ENCODE measurements at regions of chr15 and their contacts with region 1.

Region 1: DNA sequence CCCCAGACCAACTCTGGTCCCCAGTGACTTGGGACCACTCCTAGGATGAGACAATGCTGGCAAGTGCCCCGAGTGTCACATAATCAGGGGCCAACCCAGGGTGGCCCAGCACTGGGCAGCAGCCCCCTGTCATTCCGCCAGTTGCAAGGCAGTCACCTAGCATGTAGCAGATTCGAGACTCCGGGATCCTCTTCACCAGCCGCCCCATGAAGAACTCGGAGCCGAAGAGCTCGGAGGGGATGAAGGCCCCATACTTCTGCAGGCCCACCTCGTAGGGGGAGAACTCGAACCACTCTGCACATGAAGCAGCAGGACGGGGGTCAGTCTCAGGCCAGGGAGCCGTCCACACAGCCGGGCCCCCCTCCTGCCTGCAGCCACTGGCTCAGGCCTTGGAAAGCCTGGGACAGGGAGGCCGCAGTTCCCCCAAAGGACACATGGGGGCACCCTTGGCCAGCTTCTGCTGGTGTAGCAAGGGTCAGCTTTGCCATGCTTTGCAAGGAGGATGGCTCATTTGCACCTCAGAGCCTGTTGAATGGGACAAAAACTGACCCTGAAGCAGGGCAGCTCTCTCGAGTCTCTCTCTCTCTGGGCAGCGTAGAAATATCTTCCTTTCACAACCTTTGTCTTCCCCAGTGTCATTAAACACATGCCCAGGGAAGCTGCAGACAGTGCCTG is 17.0 kb upstream of the EHD4 start:
- DNase-seq: peak; percentile 87
- H3K4me3 Mint-ChIP-seq: no peak overlapping the region
- H3K27ac Mint-ChIP-seq: no peak overlapping the region
- H3K4me1 Mint-ChIP-seq: no peaks in the 10 kb centered on the region
- H3K27me3 Mint-ChIP-seq: no peaks in the 10 kb centered on the region

Region 2: GRCh38 chr15:41749526-41749925 is 239.9 kb before region 1 on chr15:
- CTCF ChIA-PET with region 1: no interaction called
- POLR2A ChIA-PET with region 1: no interaction called
- DNase-seq: no peak
- H3K4me3 Mint-ChIP-seq: no peak overlapping the region
- H3K27ac Mint-ChIP-seq: no peak overlapping the region
- H3K4me1 Mint-ChIP-seq: peaks cover 4% of the 10 kb centered on the region
- H3K27me3 Mint-ChIP-seq: no peaks in the 10 kb centered on the region

Region 3: GRCh38 chr15:42050484-42051255 is 61.3 kb after region 1 on chr15:
- CTCF ChIA-PET with region 1: interaction called, 32 read pairs
- POLR2A ChIA-PET with region 1: no interaction called
- DNase-seq: no peak
- H3K4me3 Mint-ChIP-seq: no peak overlapping the region
- H3K27ac Mint-ChIP-seq: no peak overlapping the region
- H3K4me1 Mint-ChIP-seq: peaks cover 4% of the 10 kb centered on the region
- H3K27me3 Mint-ChIP-seq: peaks cover 25% of the 10 kb centered on the region

Region 4: DNA sequence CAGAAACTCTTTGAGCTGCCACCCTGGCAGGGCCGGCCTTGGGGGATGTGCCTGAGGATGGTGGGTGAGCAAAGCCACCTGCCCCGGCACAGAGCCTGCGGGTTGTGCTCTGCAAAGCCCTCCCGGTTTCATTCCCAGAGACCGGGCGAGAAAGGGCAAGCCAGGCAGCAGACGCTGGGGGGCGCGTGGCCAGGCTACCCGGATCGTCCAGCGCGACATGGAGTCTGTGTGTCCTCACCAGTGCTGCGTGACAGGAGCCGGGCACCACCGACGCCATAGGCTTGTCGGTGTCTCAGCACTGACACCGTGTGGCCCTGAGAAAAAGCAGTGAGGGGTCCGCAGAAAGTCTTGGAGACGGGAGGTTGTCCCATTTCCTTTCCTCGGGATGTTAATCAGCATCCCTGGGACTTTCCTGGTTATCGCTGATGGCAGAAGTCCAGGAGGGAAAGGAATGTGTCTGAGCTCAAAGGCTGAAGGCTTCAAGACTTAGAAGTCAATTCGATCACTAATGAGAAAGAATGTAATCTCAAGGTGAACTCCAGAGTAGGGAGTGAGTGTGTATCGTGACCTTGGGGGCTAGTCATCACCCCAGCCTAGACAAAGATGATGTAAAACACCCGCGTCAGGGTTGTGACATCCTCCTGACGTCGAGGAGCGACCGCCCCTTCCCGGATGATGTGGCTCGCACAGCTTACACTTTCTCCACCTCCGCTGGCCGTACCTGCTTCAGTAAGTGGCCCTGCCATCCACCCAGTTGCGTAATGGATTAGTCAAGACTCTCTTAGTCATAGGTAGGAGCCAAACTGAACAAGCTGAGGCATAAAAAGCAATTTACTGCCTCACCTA is 67.8 kb after region 1 on chr15:
- CTCF ChIA-PET with region 1: interaction called, 32 read pairs
- POLR2A ChIA-PET with region 1: interaction called, 4 read pairs
- DNase-seq: peak; percentile 65
- H3K4me3 Mint-ChIP-seq: peak overlapping the region; percentile 48
- H3K27ac Mint-ChIP-seq: no peak overlapping the region
- H3K4me1 Mint-ChIP-seq: peaks cover 24% of the 10 kb centered on the region
- H3K27me3 Mint-ChIP-seq: peaks cover 45% of the 10 kb centered on the region

Region 5: GRCh38 chr15:42065033-42065432 is 75.6 kb after region 1 on chr15:
- CTCF ChIA-PET with region 1: interaction called, 13 read pairs
- POLR2A ChIA-PET with region 1: no interaction called
- DNase-seq: no peak
- H3K4me3 Mint-ChIP-seq: no peak overlapping the region
- H3K27ac Mint-ChIP-seq: no peak overlapping the region
- H3K4me1 Mint-ChIP-seq: peaks cover 7% of the 10 kb centered on the region
- H3K27me3 Mint-ChIP-seq: peaks cover 20% of the 10 kb centered on the region

Region 6: GRCh38 chr15:42084460-42085235 is 95.3 kb after region 1 on chr15:
- CTCF ChIA-PET with region 1: interaction called, 44 read pairs
- POLR2A ChIA-PET with region 1: no interaction called
- DNase-seq: peak; percentile 55
- H3K4me3 Mint-ChIP-seq: no peak overlapping the region
- H3K27ac Mint-ChIP-seq: no peak overlapping the region
- H3K4me1 Mint-ChIP-seq: peaks cover 15% of the 10 kb centered on the region
- H3K27me3 Mint-ChIP-seq: peaks cover 21% of the 10 kb centered on the region

Region 7: GRCh38 chr15:42137431-42138261 is 148.2 kb after region 1 on chr15:
- CTCF ChIA-PET with region 1: interaction called, 16 read pairs
- POLR2A ChIA-PET with region 1: no interaction called
- DNase-seq: peak; percentile 9
- H3K4me3 Mint-ChIP-seq: no peak overlapping the region
- H3K27ac Mint-ChIP-seq: no peak overlapping the region
- H3K4me1 Mint-ChIP-seq: peaks cover 3% of the 10 kb centered on the region
- H3K27me3 Mint-ChIP-seq: peaks cover 4% of the 10 kb centered on the region

Region 8: GRCh38 chr15:42152196-42152920 is 163.0 kb after region 1 on chr15:
- CTCF ChIA-PET with region 1: no interaction called
- POLR2A ChIA-PET with region 1: no interaction called
- DNase-seq: no peak
- H3K4me3 Mint-ChIP-seq: no peak overlapping the region
- H3K27ac Mint-ChIP-seq: no peak overlapping the region
- H3K4me1 Mint-ChIP-seq: no peaks in the 10 kb centered on the region
- H3K27me3 Mint-ChIP-seq: no peaks in the 10 kb centered on the region

Measured in activated CD4-positive, alpha-beta memory T cell treated with anti-CD3 and anti-CD28 coated beads, Interleukin-2, amount 10 ng/mL, durations not matched to agents 7 days and 5 days (primary cell).